ENCODE measurements at regions of chr11 and their contacts with region 1.

Region 1: GRCh38 chr11:33742249-33742851 is 6.1 kb upstream of the CD59 start:
- DNase-seq: no peak
- H3K4me3 Mint-ChIP-seq: no peak overlapping the region
- H3K27ac Mint-ChIP-seq: no peak overlapping the region
- H3K4me1 Mint-ChIP-seq: peaks cover 34% of the 10 kb centered on the region
- H3K27me3 Mint-ChIP-seq: no peaks in the 10 kb centered on the region
- CTCF ChIP-seq: peak; percentile 40

Region 2: GRCh38 chr11:33161120-33162005 is 581.0 kb before region 1 on chr11 and contains the start of gene CSTF3:
- CTCF ChIA-PET with region 1: no interaction called
- intact Hi-C with region 1: loop called (anchors 10 kb)
- DNase-seq: peak; percentile 100
- H3K4me3 Mint-ChIP-seq: peak within 1 kb of the TSS; percentile 87
- H3K27ac Mint-ChIP-seq: peak within 1 kb of the TSS; percentile 95
- H3K4me1 Mint-ChIP-seq: peaks cover 28% of the 10 kb centered on the region
- H3K27me3 Mint-ChIP-seq: no peaks in the 10 kb centered on the region
- CTCF ChIP-seq: peak; percentile 31
- total RNA-seq, gene CSTF3: 51.1 and 55.9 TPM in 2 replicates

Region 3: GRCh38 chr11:33362051-33362910 is 380.1 kb before region 1 on chr11:
- CTCF ChIA-PET with region 1: interaction called, 6 read pairs
- intact Hi-C with region 1: loop called (anchors 1 kb)
- DNase-seq: peak; percentile 17
- H3K4me3 Mint-ChIP-seq: no peak overlapping the region
- H3K27ac Mint-ChIP-seq: no peak overlapping the region
- H3K4me1 Mint-ChIP-seq: no peaks in the 10 kb centered on the region
- H3K27me3 Mint-ChIP-seq: no peaks in the 10 kb centered on the region
- CTCF ChIP-seq: peak; percentile 54

Region 4: GRCh38 chr11:33542921-33543320 is 199.4 kb before region 1 on chr11:
- CTCF ChIA-PET with region 1: interaction called, 13 read pairs
- intact Hi-C with region 1: loop called (anchors 1 kb)
- DNase-seq: peak; percentile 73
- H3K4me3 Mint-ChIP-seq: no peak overlapping the region
- H3K27ac Mint-ChIP-seq: no peak overlapping the region
- H3K4me1 Mint-ChIP-seq: peaks cover 8% of the 10 kb centered on the region
- H3K27me3 Mint-ChIP-seq: no peaks in the 10 kb centered on the region
- CTCF ChIP-seq: peak; percentile 53

Region 5: GRCh38 chr11:33700425-33701271 is 41.7 kb before region 1 on chr11 and contains the start of gene C11orf91:
- CTCF ChIA-PET with region 1: interaction called, 26 read pairs
- intact Hi-C with region 1: no loop called
- DNase-seq: peak; percentile 99
- H3K4me3 Mint-ChIP-seq: peak within 1 kb of the TSS; percentile 70
- H3K27ac Mint-ChIP-seq: peak within 1 kb of the TSS; percentile 94
- H3K4me1 Mint-ChIP-seq: peaks cover 88% of the 10 kb centered on the region
- H3K27me3 Mint-ChIP-seq: no peaks in the 10 kb centered on the region
- CTCF ChIP-seq: no peak
- total RNA-seq, gene C11orf91: 5.8 and 7.6 TPM in 2 replicates

Region 6: GRCh38 chr11:33716236-33716635 is 26.1 kb before region 1 on chr11:
- CTCF ChIA-PET with region 1: interaction called, 20 read pairs
- intact Hi-C with region 1: no loop called
- DNase-seq: no peak
- H3K4me3 Mint-ChIP-seq: peak overlapping the region; percentile 37
- H3K27ac Mint-ChIP-seq: peak overlapping the region; percentile 78
- H3K4me1 Mint-ChIP-seq: peaks cover 58% of the 10 kb centered on the region
- H3K27me3 Mint-ChIP-seq: no peaks in the 10 kb centered on the region
- CTCF ChIP-seq: peak; percentile 17

Region 7: GRCh38 chr11:33987975-33988580 is 245.7 kb after region 1 on chr11:
- CTCF ChIA-PET with region 1: no interaction called
- intact Hi-C with region 1: no loop called
- DNase-seq: peak; percentile 72
- H3K4me3 Mint-ChIP-seq: no peak overlapping the region
- H3K27ac Mint-ChIP-seq: no peak overlapping the region
- H3K4me1 Mint-ChIP-seq: no peaks in the 10 kb centered on the region
- H3K27me3 Mint-ChIP-seq: no peaks in the 10 kb centered on the region
- CTCF ChIP-seq: peak; percentile 67